ENCODE measurements at regions of chr4 and their contacts with region 1.

Region 1: DNA sequence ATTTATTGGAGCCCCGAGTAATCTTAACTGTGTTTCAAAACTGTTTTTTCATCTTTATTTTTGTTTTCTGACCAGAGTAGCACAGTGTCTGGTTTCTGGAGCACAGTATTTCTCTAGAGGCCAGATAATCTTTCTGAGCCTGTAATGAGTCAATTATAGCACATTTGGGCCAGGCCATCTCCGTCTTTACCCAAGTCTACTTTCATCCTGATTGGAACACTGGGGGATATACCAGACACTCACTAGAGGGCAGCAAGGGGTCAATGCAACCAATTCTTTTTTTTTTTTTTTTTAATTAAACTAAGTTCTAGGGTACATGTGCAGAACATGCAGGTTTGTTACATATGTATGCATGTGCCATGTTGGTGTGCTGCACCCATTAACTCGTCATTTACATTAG is 282.0 kb downstream of the ARHGAP24 start:
- DNase-seq: peak in 1 of 2 experiments; percentile 38
- H3K4me3 ChIP-seq: no peak overlapping the region
- H3K4me3 Mint-ChIP-seq: no peak overlapping the region
- H3K27ac Mint-ChIP-seq: no peak overlapping the region
- H3K4me1 ChIP-seq: no peaks in the 10 kb centered on the region
- H3K4me1 Mint-ChIP-seq: no peaks in the 10 kb centered on the region
- H3K27me3 ChIP-seq: no peaks in the 10 kb centered on the region
- H3K27me3 Mint-ChIP-seq: peaks cover 3% of the 10 kb centered on the region
- CTCF ChIP-seq: peak in 1 of 2 experiments; percentile 24

Region 2: GRCh38 chr4:85610450-85610849 is 146.5 kb before region 1 on chr4:
- CTCF ChIA-PET with region 1: no interaction called
- POLR2A ChIA-PET with region 1: no interaction called
- intact Hi-C with region 1: no loop called
- DNase-seq: no peak
- H3K4me3 ChIP-seq: no peak overlapping the region
- H3K4me3 Mint-ChIP-seq: no peak overlapping the region
- H3K27ac Mint-ChIP-seq: no peak overlapping the region
- H3K4me1 ChIP-seq: no peaks in the 10 kb centered on the region
- H3K4me1 Mint-ChIP-seq: no peaks in the 10 kb centered on the region
- H3K27me3 ChIP-seq: no peaks in the 10 kb centered on the region
- H3K27me3 Mint-ChIP-seq: no peaks in the 10 kb centered on the region
- CTCF ChIP-seq: no peak

Region 3: GRCh38 chr4:86043755-86044592 is 287.0 kb after region 1 on chr4:
- CTCF ChIA-PET with region 1: no interaction called
- POLR2A ChIA-PET with region 1: no interaction called
- intact Hi-C with region 1: loop called (anchors 5 kb)
- DNase-seq: peak in 1 of 2 experiments; percentile 49
- H3K4me3 ChIP-seq: no peak overlapping the region
- H3K4me3 Mint-ChIP-seq: no peak overlapping the region
- H3K27ac Mint-ChIP-seq: no peak overlapping the region
- H3K4me1 ChIP-seq: 0 out of 2 replicates have a peak, but pooled peaks cover 2% of the 10 kb centered on the region
- H3K4me1 Mint-ChIP-seq: no peaks in the 10 kb centered on the region
- H3K27me3 ChIP-seq: no peaks in the 10 kb centered on the region
- H3K27me3 Mint-ChIP-seq: peaks cover 11% of the 10 kb centered on the region
- CTCF ChIP-seq: peak; percentile 49 to 55